MCF 10A (cell line): ENCODE measurements at regions of chr7 and their contacts with region 1.

Region 1: GRCh38 chr7:94087664-94088352 is 83.7 kb upstream of the BET1 start:
- DNase-seq: peak; percentile 82
- H3K4me3 Mint-ChIP-seq: peak overlapping the region; percentile 37
- H3K27ac Mint-ChIP-seq: no peak overlapping the region
- H3K4me1 Mint-ChIP-seq: peaks cover 6% of the 10 kb centered on the region
- H3K27me3 Mint-ChIP-seq: no peaks in the 10 kb centered on the region
- CTCF ChIP-seq: peak; percentile 73

Region 2: DNA sequence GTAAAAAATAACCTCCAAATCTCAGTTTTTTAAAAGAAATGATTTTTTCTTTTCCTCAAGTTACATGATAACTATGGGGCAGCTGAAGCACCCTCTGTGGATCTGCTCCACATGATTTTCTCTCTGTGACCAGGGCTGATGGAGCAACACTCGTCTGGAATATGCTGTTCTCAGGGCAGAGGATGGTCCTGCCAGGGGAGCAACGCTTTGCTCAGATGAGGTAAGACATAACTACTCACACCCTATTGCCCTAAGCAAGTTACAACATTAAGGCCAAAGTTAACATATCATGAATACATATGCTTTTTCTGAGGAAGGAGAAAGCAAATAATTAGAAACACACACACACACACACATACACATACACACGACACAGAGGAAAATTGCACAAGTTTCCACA is 584.7 kb before region 1 on chr7:
- CTCF ChIA-PET with region 1: no interaction called
- POLR2A ChIA-PET with region 1: no interaction called
- intact Hi-C with region 1: no loop called
- DNase-seq: no peak
- H3K4me3 Mint-ChIP-seq: no peak overlapping the region
- H3K27ac Mint-ChIP-seq: no peak overlapping the region
- H3K4me1 Mint-ChIP-seq: no peaks in the 10 kb centered on the region
- H3K27me3 Mint-ChIP-seq: peaks cover 96% of the 10 kb centered on the region
- CTCF ChIP-seq: no peak

Region 3: DNA sequence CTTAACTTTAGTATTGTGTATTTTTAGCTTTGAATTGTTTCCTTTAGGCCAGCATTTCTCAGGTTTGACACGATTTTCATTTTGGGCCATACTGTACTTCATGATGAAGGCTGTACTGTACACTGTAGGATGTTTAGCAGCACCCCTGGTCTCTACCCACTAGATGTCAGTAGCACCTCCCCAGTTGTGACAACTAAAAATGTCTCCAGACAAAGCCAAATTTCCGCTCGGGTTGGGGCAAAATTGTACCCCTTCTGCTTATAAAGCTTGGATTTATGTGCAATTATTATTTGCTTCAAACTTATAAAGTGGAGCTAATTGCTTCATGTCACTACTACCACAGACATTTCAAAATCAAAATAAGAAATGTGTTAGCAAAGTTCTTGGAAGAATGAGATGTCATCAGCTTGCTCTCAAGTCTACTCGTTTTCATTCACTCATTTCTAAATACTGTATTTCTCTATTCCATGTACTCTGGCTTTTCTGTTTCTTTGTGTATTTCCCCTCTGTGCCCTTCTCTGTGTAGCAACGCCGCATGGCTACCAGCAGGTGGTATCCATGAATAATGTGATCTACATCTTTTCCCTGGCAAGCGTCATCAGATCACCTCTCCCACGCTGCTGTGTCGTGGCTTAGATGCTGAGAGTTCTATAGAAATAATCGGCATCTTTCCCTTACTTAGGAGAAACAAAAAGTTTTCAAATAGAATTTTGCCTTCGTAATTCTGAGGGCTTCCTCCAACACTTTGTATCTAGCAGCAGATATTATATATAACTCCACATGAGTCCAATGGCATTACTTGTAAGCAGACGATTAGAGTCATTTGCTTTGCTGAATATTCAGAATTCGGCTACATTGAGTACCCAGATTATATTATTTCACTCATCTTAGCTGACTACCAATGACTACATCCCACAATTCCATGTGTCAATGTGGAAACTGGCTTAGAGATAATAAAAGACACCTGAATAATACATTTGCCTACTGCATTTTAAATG is 465.5 kb before region 1 on chr7:
- CTCF ChIA-PET with region 1: interaction called, 13 read pairs
- POLR2A ChIA-PET with region 1: no interaction called
- intact Hi-C with region 1: loop called (anchors 1 kb)
- DNase-seq: peak; percentile 41
- H3K4me3 Mint-ChIP-seq: no peak overlapping the region
- H3K27ac Mint-ChIP-seq: no peak overlapping the region
- H3K4me1 Mint-ChIP-seq: peaks cover 6% of the 10 kb centered on the region
- H3K27me3 Mint-ChIP-seq: peaks cover 91% of the 10 kb centered on the region
- CTCF ChIP-seq: peak; percentile 41

Region 4: GRCh38 chr7:93799750-93800357 is 288.0 kb before region 1 on chr7:
- CTCF ChIA-PET with region 1: interaction called, 75 read pairs
- POLR2A ChIA-PET with region 1: interaction called, 4 read pairs
- intact Hi-C with region 1: loop called (anchors 1 kb)
- DNase-seq: peak; percentile 34
- H3K4me3 Mint-ChIP-seq: no peak overlapping the region
- H3K27ac Mint-ChIP-seq: no peak overlapping the region
- H3K4me1 Mint-ChIP-seq: peaks cover 6% of the 10 kb centered on the region
- H3K27me3 Mint-ChIP-seq: no peaks in the 10 kb centered on the region
- CTCF ChIP-seq: peak; percentile 56

Region 5: DNA sequence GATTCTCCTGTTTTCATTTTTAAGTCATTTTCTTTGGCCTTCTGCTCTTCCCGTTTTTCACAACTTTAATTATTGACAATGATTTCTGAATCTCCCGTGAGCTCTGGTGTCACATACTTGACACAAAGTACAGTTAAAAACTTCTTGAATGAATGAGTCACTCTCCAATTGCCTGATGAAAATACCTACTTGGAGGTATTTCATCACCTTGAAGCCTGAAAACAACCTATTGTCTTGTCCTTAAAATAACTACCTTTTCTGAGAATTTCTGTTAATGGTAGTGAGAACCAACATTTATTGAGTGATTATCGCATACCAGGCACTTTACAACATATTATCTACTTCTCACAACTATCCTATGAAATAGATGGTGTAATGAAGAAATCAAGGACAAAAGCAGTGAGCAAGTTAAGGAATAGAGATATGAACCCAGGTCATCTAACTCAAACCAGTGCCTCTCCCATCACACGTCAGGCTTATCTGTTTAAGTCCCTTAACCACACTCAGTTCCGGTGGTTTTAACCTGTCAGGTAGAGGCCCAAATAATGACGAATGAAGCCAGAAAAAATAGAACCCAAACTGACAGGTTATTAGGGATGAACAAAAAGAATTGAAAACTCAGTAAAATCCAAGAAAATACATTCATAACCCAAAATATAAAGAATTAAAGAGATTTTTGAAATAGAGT is 95.2 kb before region 1 on chr7:
- CTCF ChIA-PET with region 1: interaction called, 13 read pairs
- POLR2A ChIA-PET with region 1: interaction called, 5 read pairs
- intact Hi-C with region 1: no loop called
- DNase-seq: peak; percentile 44
- H3K4me3 Mint-ChIP-seq: no peak overlapping the region
- H3K27ac Mint-ChIP-seq: peak overlapping the region; percentile 2
- H3K4me1 Mint-ChIP-seq: peaks cover 8% of the 10 kb centered on the region
- H3K27me3 Mint-ChIP-seq: no peaks in the 10 kb centered on the region
- CTCF ChIP-seq: no peak

Region 6: DNA sequence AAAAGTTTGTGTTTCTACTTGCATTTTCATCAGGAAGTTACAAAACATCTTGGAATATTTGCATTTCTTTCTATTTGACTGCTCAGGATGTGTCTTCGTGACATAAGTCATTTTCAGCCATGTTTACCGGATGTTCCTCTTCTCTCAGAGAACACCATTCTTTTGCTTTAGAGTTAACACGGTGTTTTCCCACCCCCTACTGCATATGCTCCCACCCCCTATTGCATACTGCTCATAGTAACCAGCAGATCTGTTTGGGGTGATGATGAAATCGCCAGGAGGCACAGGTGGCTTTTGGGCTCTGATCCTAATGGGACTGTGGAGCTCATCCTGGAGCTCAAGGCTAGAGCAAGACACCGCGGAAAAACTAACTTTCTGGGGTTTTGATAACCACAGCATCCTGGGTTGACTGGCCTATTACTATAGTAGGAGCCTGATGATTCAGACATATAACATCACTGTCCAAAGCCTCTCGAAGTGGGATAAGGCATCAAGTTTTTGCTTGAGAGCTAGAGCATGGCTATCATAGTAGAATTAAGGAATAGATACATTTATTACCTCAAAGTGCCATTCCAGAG is 18.6 kb before region 1 on chr7:
- CTCF ChIA-PET with region 1: interaction called, 42 read pairs
- POLR2A ChIA-PET with region 1: interaction called, 4 read pairs
- intact Hi-C with region 1: no loop called
- DNase-seq: no peak
- H3K4me3 Mint-ChIP-seq: no peak overlapping the region
- H3K27ac Mint-ChIP-seq: no peak overlapping the region
- H3K4me1 Mint-ChIP-seq: peaks cover 17% of the 10 kb centered on the region
- H3K27me3 Mint-ChIP-seq: no peaks in the 10 kb centered on the region
- CTCF ChIP-seq: no peak

Region 7: DNA sequence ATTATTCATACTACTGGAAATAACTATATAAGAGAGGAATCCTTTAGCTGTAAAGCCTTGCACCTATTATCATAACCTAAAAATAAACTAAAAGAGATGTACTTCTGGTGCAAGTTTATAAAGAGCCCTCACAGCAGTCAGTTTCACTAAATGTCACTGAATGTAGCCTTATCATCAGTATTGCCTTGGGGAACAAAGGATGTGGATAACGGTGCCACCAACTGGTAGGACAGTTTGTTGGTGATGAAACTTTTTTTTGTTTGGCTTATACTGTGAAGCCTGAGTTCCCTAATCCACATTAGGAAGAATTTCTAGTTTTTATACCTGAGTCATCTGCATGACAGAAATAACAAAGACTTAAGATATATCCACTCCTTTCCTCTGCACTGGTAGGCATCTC is 189.0 kb after region 1 on chr7:
- CTCF ChIA-PET with region 1: interaction called, 19 read pairs
- POLR2A ChIA-PET with region 1: interaction called, 3 read pairs
- intact Hi-C with region 1: loop called (anchors 1 kb)
- DNase-seq: peak; percentile 56
- H3K4me3 Mint-ChIP-seq: no peak overlapping the region
- H3K27ac Mint-ChIP-seq: no peak overlapping the region
- H3K4me1 Mint-ChIP-seq: no peaks in the 10 kb centered on the region
- H3K27me3 Mint-ChIP-seq: no peaks in the 10 kb centered on the region
- CTCF ChIP-seq: peak; percentile 49